Activated CD4-positive, alpha-beta memory T cell treated with anti-CD3 and anti-CD28 coated beads for 36 hours (primary cell): ENCODE measurements at regions of chrX and their contacts with region 1.

Region 1: GRCh38 chrX:30618156-30618765 is 35.0 kb upstream of the GK start:
- DNase-seq: no peak
- H3K4me3 Mint-ChIP-seq: no peak overlapping the region
- H3K27ac Mint-ChIP-seq: no peak overlapping the region
- H3K4me1 Mint-ChIP-seq: peaks cover 11% of the 10 kb centered on the region
- H3K27me3 Mint-ChIP-seq: no peaks in the 10 kb centered on the region

Region 2: DNA sequence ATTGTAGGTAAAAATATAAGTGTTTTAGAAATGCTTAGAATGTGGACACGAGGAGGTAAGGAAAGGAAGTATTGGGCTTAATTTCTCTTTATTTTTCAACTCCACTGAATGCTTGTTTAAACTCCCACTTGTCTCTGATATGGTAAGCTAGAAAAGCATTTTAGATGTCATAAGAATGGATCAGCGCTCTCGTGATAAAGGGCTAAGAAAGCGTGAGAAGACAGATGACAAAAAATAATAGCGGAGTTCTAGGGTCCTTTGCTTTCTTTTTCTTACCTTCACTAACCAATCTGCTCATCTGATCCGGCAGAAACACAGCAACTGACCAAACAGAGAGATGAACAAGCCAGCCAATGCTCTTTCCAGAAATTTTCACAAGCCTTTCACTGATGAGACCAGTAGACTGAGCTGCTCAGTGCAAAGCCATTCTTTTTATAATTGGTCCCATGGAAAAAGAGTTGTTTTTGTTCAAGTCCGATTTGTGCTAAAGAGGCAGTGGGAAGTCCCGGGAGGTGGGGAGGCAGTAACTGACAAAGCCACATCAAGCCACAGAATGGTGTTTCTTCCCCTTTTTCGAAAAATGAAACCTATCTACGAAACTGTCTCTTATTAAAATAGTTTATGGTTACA is 40.8 kb before region 1 on chrX and contains the start of gene TASL:
- CTCF ChIA-PET with region 1: interaction called, 3 read pairs
- POLR2A ChIA-PET with region 1: no interaction called
- intact Hi-C with region 1: loop called (anchors 5 kb)
- DNase-seq: peak; percentile 40
- H3K4me3 Mint-ChIP-seq: peak within 1 kb of the TSS; percentile 81
- H3K27ac Mint-ChIP-seq: peak within 1 kb of the TSS; percentile 88
- H3K4me1 Mint-ChIP-seq: peaks cover 20% of the 10 kb centered on the region
- H3K27me3 Mint-ChIP-seq: no peaks in the 10 kb centered on the region
- total RNA-seq, gene TASL: 1.1 to 1.6 TPM

Region 3: GRCh38 chrX:30643313-30643821 is 25.1 kb after region 1 on chrX:
- CTCF ChIA-PET with region 1: no interaction called
- POLR2A ChIA-PET with region 1: no interaction called
- intact Hi-C with region 1: loop called (anchors 2 kb)
- DNase-seq: no peak
- H3K4me3 Mint-ChIP-seq: no peak overlapping the region
- H3K27ac Mint-ChIP-seq: peak overlapping the region; percentile 79
- H3K4me1 Mint-ChIP-seq: peaks cover 26% of the 10 kb centered on the region
- H3K27me3 Mint-ChIP-seq: no peaks in the 10 kb centered on the region

Region 4: GRCh38 chrX:30659421-30659820 is 41.2 kb after region 1 on chrX:
- CTCF ChIA-PET with region 1: no interaction called
- POLR2A ChIA-PET with region 1: no interaction called
- intact Hi-C with region 1: loop called (anchors 2 kb)
- DNase-seq: no peak
- H3K4me3 Mint-ChIP-seq: peak overlapping the region; percentile 38
- H3K27ac Mint-ChIP-seq: peak overlapping the region; percentile 96
- H3K4me1 Mint-ChIP-seq: peaks cover 46% of the 10 kb centered on the region
- H3K27me3 Mint-ChIP-seq: no peaks in the 10 kb centered on the region

Region 5: GRCh38 chrX:30781711-30782444 is 163.6 kb after region 1 on chrX:
- CTCF ChIA-PET with region 1: no interaction called
- POLR2A ChIA-PET with region 1: no interaction called
- intact Hi-C with region 1: loop called (anchors 1 kb)
- DNase-seq: no peak
- H3K4me3 Mint-ChIP-seq: no peak overlapping the region
- H3K27ac Mint-ChIP-seq: no peak overlapping the region
- H3K4me1 Mint-ChIP-seq: peaks cover 15% of the 10 kb centered on the region
- H3K27me3 Mint-ChIP-seq: peaks cover 11% of the 10 kb centered on the region